PC-3 (cell line): ENCODE measurements at regions of chr3 and their contacts with region 1.

Region 1: GRCh38 chr3:183161552-183162336 is 790 bp downstream of the LAMP3 start:
- DNase-seq: no peak
- ATAC-seq: no peak
- H3K4me3 ChIP-seq: peak overlapping the region; percentile 88
- H3K27ac ChIP-seq: no peak overlapping the region
- H3K4me1 ChIP-seq: no peaks in the 10 kb centered on the region
- H3K27me3 ChIP-seq: no peaks in the 10 kb centered on the region
- CTCF ChIP-seq: no peak

Region 2: DNA sequence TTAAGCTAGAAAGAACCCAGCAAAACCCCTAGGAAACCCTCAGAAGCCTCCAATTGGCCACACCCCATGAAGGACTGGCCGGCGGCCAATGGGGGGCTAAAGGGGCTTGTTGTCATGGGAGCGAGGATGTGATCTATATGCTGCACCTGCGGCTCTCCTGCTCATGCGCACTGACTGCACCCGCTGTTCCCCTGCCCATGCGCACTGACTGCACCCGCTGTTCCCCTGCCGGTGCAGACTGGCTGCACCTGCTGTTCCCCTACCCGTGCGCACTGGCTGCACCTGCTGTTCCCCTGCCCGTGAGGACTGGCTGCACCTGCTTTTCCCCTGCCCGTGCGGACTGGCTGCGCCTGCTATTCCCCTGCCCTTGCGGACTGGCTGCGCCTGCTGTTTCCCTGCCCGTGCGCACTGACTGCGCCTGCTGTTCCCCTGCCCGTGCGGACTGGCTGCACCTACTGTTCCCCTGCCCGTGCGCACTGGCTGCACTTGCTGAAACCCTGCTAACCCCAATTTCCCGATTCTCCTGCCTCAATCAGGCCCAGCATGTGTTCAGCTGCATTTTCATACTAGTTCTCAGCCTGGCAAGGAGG is 45.6 kb before region 1 on chr3:
- CTCF ChIA-PET with region 1: no interaction called
- POLR2A ChIA-PET with region 1: no interaction called
- intact Hi-C with region 1: no loop called
- DNase-seq: peak; percentile 48
- ATAC-seq: peak; percentile 89
- H3K4me3 ChIP-seq: peak overlapping the region; percentile 67
- H3K27ac ChIP-seq: no peak overlapping the region
- H3K4me1 ChIP-seq: peaks cover 7% of the 10 kb centered on the region
- H3K27me3 ChIP-seq: no peaks in the 10 kb centered on the region
- CTCF ChIP-seq: no peak

Region 3: DNA sequence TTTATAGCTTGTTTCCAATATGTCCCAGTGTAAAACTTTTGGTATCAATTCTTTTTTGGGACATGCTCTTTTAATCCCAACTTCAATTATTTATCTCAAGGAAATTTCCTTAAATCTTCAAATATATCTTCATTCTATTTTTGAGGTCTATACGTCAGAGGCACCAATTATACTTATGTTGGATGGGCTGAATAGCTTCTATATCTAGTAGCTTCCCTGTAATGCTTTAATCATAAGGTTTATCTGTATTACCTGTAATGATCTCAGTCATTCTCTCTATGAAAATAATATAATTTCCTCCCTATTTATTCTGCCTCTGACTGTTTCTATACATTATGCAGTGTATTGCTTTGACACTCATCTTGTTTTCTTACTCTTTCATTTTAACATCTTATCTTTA is 32.5 kb before region 1 on chr3:
- CTCF ChIA-PET with region 1: no interaction called
- POLR2A ChIA-PET with region 1: no interaction called
- intact Hi-C with region 1: loop called (anchors 5 kb)
- DNase-seq: no peak
- ATAC-seq: no peak
- H3K4me3 ChIP-seq: no peak overlapping the region
- H3K27ac ChIP-seq: peak overlapping the region; percentile 43
- H3K4me1 ChIP-seq: peaks cover 23% of the 10 kb centered on the region
- H3K27me3 ChIP-seq: no peaks in the 10 kb centered on the region
- CTCF ChIP-seq: no peak

Region 4: GRCh38 chr3:183201960-183202722 is 40.4 kb after region 1 on chr3:
- CTCF ChIA-PET with region 1: no interaction called
- POLR2A ChIA-PET with region 1: no interaction called
- intact Hi-C with region 1: no loop called
- DNase-seq: peak; percentile 75
- ATAC-seq: peak; percentile 59
- H3K4me3 ChIP-seq: no peak overlapping the region
- H3K27ac ChIP-seq: no peak overlapping the region
- H3K4me1 ChIP-seq: no peaks in the 10 kb centered on the region
- H3K27me3 ChIP-seq: no peaks in the 10 kb centered on the region
- CTCF ChIP-seq: no peak